ENCODE measurements at regions of chr3 and their contacts with region 1.

Region 1: DNA sequence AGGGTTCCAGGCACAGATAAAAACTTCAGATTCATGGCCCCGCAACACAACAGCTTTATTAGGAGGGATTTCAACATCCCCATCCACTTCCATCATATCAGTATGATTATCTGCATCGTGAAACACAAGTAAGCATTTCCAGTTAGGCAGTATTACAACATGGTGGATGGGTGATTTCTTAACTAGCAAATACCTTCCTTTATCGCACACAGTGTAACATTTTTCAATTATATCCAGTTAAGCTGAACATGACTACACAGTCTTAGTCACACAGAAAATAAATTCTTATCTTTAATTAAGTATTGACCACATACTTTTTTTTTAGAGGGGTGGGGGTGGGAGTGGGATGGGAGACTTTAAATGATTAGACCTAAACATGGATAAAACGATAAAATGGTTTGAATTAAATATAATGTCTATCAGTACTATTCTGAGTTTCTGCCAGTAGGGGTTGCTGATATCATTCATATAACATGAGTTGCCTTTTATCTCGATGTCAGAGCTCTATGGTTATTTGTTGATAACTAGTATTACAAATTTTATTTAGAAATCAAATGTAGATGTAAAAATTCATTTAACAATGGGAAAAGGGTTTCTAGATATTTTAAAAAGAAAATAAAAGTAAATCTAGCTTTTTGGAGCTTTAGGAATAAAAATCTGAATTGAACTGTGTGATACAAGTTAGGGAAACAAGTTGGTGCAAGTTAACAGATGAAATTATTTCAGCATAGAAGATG is 146.6 kb downstream of the TBL1XR1 start:
- DNase-seq: no peak
- H3K4me3 ChIP-seq: peak overlapping the region in 27 of 59 donors; percentile 6 to 50 (median 28)
- H3K27ac ChIP-seq: peak overlapping the region in 57 of 59 donors; percentile 8 to 91 (median 77)
- H3K27me3 ChIP-seq: no peaks in the 10 kb centered on the region
- CTCF ChIP-seq: peak; percentile 53 to 82 (median 74)

Region 2: GRCh38 chr3:177468331-177468730 is 417.7 kb after region 1 on chr3:
- intact Hi-C with region 1: loop called in 1 of 2 experiments (anchors 10 kb)
- DNase-seq: no peak
- H3K4me3 ChIP-seq: no peak overlapping the region
- H3K27ac ChIP-seq: no peak overlapping the region
- H3K27me3 ChIP-seq: no peaks in the 10 kb centered on the region
- CTCF ChIP-seq: no peak

Measured in dorsolateral prefrontal cortex (tissue), 120 donors.